Lower leg skin (tissue), 4 donors: ENCODE measurements at regions of chr11 and their contacts with region 1.

Region 1: DNA sequence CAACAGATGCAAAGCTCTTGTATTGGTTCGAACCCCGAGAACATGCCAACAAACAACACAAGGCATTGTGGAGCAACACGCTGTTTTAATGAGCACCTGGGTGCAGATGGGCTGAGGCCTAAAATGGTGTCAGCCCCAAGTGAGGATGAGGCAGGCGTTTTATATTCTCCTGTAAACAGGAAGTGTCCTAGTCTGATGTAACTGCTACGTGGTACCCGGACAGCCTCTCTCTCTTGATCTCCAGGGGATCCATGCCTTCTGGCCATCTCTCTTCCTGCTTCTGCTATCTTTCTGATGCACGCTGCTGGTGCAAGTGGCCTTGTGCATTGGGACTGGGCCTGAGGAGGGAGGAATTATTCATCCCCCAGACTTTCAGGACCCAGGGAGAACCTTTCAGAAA is 19.4 kb upstream of the VSTM5 start:
- DNase-seq: no peak
- H3K4me3 ChIP-seq: no peak overlapping the region
- CTCF ChIP-seq: no peak
- POLR2A ChIP-seq: no peak

Region 2: GRCh38 chr11:95444309-95445241 is 1574.7 kb after region 1 on chr11:
- intact Hi-C with region 1: loop called (anchors 5 kb)
- DNase-seq: no peak
- H3K4me3 ChIP-seq: no peak overlapping the region
- CTCF ChIP-seq: no peak
- POLR2A ChIP-seq: no peak